ENCODE measurements at regions of chr6 and their contacts with region 1.

Region 1: DNA sequence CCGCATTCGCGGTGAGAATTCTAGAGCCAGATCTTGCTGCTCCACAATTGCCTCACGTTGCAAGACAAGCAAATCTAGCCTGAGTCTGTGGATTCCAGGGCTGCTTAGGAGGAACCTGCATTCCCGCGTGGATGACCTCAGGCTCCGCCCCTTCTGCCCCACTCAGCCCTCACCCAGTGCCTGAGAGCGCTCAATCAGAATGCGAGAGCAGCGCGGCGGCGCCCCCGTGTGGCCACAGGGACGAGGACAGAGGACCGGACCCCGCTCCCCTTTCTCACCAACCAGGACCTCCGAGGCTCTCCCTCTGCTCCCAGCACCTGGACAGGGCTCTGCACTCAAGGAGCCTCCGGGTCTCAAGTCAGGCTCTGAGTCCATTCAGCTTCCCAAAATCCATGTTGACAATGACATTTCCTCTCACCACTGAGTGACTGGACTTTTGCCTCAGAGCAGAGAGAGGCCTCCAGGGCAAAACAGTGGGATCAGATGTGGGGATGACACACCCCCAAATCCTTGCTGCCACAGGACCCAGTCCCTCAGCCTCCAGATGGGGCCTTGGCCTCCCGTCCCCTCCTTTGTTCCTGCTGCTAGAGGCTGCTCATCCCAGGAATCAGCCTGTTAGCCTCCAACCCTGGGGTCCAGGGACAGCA is 52.0 kb downstream of the RPP21 start:
- DNase-seq: peak; percentile 84
- H3K4me3 ChIP-seq: no peak overlapping the region
- H3K27ac ChIP-seq: no peak overlapping the region
- H3K4me1 ChIP-seq: no peaks in the 10 kb centered on the region
- H3K27me3 ChIP-seq: no peaks in the 10 kb centered on the region
- CTCF ChIP-seq: peak; percentile 73

Region 2: DNA sequence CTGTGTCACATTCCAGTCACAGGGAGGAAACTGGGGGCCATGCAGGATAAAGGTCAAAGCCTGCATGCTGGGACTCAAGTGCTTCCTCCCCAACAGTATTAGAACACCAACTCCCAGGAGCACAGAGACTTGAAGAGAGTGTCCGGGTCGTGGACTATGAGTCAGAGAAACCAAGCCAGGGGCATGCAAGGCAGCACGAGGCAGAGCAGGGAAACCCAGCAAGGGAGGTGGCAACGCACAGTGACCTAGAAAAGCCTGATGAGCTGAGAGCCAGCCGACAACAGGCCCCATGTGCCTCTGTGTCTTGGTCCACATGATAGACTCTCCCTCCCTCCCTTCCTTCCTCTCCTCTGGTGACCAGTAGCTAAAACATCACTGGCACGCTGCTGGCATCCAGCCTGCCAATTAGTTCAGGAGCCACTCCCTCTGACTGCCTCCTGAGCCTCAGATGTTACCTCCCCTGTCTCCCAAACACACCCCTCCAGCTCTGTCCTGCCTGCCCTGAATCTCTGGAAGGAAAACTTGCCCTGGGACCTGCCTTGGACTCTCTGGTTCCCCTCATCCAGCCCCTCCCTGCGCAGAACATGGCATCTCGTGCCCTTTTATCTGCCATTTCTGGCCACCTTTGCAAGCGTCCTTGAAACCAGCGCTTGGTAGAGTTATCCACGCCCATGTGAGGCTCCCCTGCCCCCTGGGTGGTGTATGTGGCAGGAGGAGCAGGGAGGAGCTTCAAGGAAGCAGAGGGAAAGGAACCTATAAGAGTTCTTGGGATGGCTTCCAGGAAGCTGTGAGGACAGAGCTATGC is 305.2 kb before region 1 on chr6:
- intact Hi-C with region 1: no loop called
- DNase-seq: peak; percentile 86
- H3K4me3 ChIP-seq: no peak overlapping the region
- H3K27ac ChIP-seq: peak overlapping the region; percentile 83
- H3K4me1 ChIP-seq: no peaks in the 10 kb centered on the region
- H3K27me3 ChIP-seq: no peaks in the 10 kb centered on the region
- CTCF ChIP-seq: no peak

Region 3: GRCh38 chr6:30244560-30244959 is 152.4 kb before region 1 on chr6:
- intact Hi-C with region 1: loop called (anchors 5 kb)
- DNase-seq: no peak
- H3K4me3 ChIP-seq: no peak overlapping the region
- H3K27ac ChIP-seq: no peak overlapping the region
- H3K4me1 ChIP-seq: no peaks in the 10 kb centered on the region
- H3K27me3 ChIP-seq: no peaks in the 10 kb centered on the region
- CTCF ChIP-seq: no peak

Region 4: GRCh38 chr6:30357678-30358540 is 39.0 kb before region 1 on chr6:
- intact Hi-C with region 1: loop called (anchors 2 kb)
- DNase-seq: peak; percentile 45
- H3K4me3 ChIP-seq: peak overlapping the region; percentile 19
- H3K27ac ChIP-seq: no peak overlapping the region
- H3K4me1 ChIP-seq: no peaks in the 10 kb centered on the region
- H3K27me3 ChIP-seq: peaks cover 13% of the 10 kb centered on the region
- CTCF ChIP-seq: peak; percentile 64